H1 (cell line): ENCODE measurements at regions of chr7 and their contacts with region 1.

Region 1: DNA sequence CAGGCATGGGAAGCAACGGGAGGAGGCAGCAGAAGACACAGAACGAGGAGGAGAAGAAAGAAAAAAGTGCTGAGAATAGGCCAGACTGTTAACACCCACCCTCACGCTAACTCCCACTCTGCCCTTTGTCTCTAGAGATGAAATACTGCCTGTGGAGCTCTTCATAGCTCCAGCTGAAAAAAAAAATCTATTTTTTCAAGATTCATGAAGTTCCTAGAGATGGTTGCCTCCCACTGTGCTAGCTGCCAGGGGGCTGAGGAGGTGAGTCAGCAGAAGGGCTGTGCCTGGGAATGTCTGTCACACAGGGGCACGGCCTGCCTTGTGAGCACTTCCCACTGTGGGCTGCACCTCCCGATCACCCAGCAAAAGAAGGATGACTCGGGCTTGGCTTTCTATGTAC is 144.5 kb downstream of the RNF216 start:
- DNase-seq: no peak
- H3K4me3 ChIP-seq: no peak overlapping the region
- H3K27ac ChIP-seq: no peak overlapping the region
- H3K4me1 ChIP-seq: peaks cover 14 to 33% (median 21%) of the 10 kb centered on the region in 4 experiments
- H3K27me3 ChIP-seq: no peaks in the 10 kb centered on the region
- CTCF ChIP-seq: no peak
- EP300 ChIP-seq: no peak
- POLR2A ChIP-seq: no peak
- RAD21 ChIP-seq: no peak

Region 2: GRCh38 chr7:5526100-5526905 is 110.6 kb before region 1 on chr7:
- CTCF ChIA-PET with region 1: no interaction called
- POLR2A ChIA-PET with region 1: interaction called, 12 read pairs
- DNase-seq: peak in 1 of 2 experiments; percentile 76
- H3K4me3 ChIP-seq: peak overlapping the region in 1 of 4 experiments; percentile 90; a peak in 2 of 8 replicates
- H3K27ac ChIP-seq: peak overlapping the region; percentile 24; the same call in 1 of the 2 replicates
- H3K4me1 ChIP-seq: peaks cover 0 to 21% (median 12%) of the 10 kb centered on the region in 4 experiments; a peak in 6 of 7 replicates
- H3K27me3 ChIP-seq: no peaks in the 10 kb centered on the region
- CTCF ChIP-seq: peak in 1 of 3 experiments; percentile 8; a peak in 1 of 4 replicates
- EP300 ChIP-seq: no peak
- POLR2A ChIP-seq: peak in 1 of 2 experiments; percentile 72; a peak in 2 of 3 replicates
- RAD21 ChIP-seq: peak; percentile 17 to 26; a peak in 2 of 4 replicates

Region 3: GRCh38 chr7:5615190-5616070 is 21.5 kb before region 1 on chr7:
- CTCF ChIA-PET with region 1: interaction called, 6 read pairs
- POLR2A ChIA-PET with region 1: interaction called, 11 read pairs
- DNase-seq: no peak
- H3K4me3 ChIP-seq: no peak overlapping the region
- H3K27ac ChIP-seq: no peak overlapping the region
- H3K4me1 ChIP-seq: peaks cover 0 to 4% (median under 1%) of the 10 kb centered on the region in 4 experiments; a peak in 3 of 7 replicates
- H3K27me3 ChIP-seq: no peaks in the 10 kb centered on the region
- CTCF ChIP-seq: no peak
- EP300 ChIP-seq: no peak
- POLR2A ChIP-seq: no peak
- RAD21 ChIP-seq: no peak

Region 4: DNA sequence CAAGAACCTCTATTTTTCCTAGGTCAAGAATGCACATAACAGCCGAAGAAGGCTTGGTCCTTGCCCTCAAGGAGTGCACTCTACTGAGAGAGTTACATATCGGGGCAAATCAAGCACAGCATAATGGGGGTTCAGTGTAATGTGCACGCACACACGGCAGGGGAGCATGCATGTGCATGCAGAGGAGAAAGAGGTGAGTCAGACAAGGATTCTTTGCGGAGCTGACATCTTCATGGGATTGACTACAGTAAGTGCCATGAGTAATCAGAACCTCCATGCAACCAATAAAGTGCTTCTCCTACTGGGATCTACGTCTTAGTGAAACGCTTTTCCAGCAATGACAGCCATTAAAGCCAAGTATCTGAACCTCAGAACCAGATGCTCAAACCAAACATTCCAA is 21.0 kb after region 1 on chr7:
- CTCF ChIA-PET with region 1: interaction called, 90 read pairs
- POLR2A ChIA-PET with region 1: interaction called, 3 read pairs
- DNase-seq: no peak
- H3K4me3 ChIP-seq: no peak overlapping the region
- H3K27ac ChIP-seq: no peak overlapping the region
- H3K4me1 ChIP-seq: no peaks in the 10 kb centered on the region; a peak in 1 of 7 replicates
- H3K27me3 ChIP-seq: no peaks in the 10 kb centered on the region
- CTCF ChIP-seq: no peak
- EP300 ChIP-seq: no peak
- POLR2A ChIP-seq: no peak
- RAD21 ChIP-seq: no peak